ENCODE measurements at regions of chr2 and their contacts with region 1.

Region 1: DNA sequence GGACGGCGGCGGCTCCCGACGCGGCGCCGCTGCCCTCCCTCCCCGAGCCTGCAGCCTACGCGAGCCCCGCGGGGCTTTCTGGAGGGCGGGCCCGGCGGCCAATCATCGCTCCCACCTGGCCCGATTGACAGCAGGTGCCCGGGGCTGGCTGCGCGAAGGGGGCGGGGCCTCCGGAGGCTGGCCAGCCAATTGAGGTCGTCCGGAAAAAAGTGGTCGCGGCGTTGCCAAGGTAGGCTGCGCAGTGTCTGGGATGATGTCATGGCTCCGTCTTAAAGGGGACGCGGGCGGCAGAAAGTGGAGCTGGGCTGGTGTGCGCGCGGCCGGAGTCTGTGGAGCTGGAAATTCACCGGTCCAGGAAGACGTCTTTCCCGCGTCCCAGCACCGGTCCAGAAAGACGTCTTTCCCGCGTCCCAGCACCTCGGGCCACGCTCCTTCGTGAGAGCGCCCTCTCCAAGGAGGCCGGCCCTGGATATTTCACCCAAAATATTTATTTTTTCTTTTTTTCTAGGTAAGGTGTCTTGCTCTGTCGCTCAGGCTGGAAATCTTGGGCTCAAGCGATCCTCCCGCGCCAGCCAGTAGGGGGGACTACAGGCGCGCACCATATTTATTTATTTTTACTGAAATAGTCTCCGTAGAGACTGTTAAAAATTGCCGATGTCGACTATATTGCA is at the start of gene ACTR1B:
- DNase-seq: peak; percentile 93
- ATAC-seq: peak; percentile 89
- H3K4me3 Mint-ChIP-seq: peak within 1 kb of the TSS; percentile 92
- H3K27ac Mint-ChIP-seq: peak within 1 kb of the TSS; percentile 91
- H3K4me1 Mint-ChIP-seq: peaks cover 28% of the 10 kb centered on the region
- H3K27me3 Mint-ChIP-seq: no peaks in the 10 kb centered on the region
- CTCF ChIP-seq: no peak
- total RNA-seq, gene ACTR1B: 55.0 and 55.9 TPM in 2 replicates

Region 2: DNA sequence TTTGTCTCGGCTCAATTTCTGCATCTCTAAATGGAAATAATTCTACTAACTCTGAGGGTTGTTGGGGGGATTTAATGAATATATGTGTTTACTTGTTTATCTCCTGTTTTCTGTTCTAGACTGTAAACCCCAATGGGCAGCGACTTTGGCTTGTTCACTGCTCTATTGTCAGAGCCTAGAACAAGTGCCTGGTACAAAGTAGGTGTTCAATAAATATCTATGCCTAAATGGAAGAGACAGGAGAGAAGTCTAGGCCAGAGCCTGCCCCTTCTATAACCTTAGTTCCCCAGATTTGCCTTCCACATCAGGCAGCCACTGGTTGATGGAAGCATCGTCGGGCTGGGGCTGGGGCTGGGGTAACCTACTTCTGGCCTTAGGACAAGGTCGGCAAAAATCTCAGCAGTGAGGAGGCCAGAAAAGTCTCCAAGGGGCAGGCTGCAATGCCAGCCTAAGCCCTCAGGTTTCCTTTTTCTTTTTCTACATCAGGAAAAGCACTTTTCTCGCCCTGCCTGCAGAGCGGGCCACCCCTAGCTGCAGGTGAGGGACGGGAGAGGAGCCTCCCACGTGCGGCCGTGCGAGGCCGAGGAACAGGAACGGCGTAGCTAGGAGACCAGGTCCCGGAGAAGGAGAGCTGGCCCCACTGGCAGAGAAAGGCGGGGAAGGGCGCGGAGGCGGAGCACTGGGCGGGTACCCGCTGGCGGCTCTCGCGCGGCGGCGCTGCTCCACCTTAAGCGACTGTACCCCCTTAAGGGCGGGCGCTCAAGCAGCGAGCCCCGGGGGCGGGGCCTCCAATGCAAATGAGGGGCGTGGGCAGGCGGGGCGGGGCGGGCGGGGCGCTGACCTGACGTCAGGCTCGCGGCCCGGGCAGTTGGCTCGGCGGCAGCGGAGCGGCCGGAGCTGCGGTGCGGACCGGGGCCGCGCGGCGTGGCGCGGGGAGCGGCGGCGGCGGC is 903.8 kb before region 1 on chr2 and contains the start of gene CNNM4:
- CTCF ChIA-PET with region 1: no interaction called
- POLR2A ChIA-PET with region 1: no interaction called
- intact Hi-C with region 1: loop called (anchors 5 kb)
- DNase-seq: peak; percentile 89
- ATAC-seq: peak; percentile 91
- H3K4me3 Mint-ChIP-seq: peak within 1 kb of the TSS; percentile 90
- H3K27ac Mint-ChIP-seq: peak within 1 kb of the TSS; percentile 89
- H3K4me1 Mint-ChIP-seq: peaks cover 49% of the 10 kb centered on the region
- H3K27me3 Mint-ChIP-seq: no peaks in the 10 kb centered on the region
- CTCF ChIP-seq: no peak
- total RNA-seq, gene CNNM4: 7.4 and 10.0 TPM in 2 replicates

Region 3: DNA sequence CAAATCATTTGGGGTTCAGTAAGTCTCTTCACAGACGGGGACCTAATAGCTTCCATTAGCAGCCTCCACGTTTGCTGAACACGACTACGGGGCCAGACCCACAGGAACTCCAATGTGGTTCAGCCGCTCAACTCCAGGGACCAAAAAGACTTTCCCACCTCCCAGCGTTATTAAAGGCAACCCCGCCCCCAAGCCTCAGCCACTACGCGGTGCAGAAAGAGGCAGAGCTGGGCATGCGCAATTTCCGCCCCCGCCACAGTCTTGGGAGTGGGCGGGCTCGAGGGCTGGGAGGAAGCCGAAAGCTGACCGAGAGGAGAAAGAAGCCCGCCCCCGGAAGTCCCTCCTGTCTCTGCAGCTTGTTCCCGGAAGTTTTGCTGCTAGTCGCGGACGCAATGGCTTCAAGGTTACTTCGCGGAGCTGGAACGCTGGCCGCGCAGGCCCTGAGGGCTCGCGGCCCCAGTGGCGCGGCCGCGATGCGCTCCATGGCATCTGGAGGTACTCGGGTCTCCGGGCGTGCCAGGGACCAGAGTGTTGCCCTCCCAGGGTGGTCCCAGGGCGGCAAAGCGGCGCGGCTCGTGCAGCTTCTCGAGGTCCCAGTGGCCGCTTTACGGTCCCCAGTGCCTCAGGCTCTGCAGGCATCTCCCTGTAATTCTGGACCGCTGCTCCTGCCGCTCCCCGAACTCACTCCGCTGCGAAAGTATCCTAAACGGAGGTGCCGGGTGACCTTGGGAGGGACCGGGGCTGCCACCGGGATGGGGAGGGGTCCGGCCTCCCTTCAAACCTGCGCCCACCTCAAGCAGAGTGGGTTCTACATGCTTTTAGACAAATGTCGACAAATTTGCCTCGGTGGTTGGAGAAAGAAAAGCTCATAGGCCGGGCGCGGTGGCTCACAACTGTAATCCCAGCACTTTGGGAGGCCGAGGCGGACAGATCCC is 18.1 kb before region 1 on chr2 and contains the start of gene COX5B:
- CTCF ChIA-PET with region 1: interaction called, 18 read pairs
- POLR2A ChIA-PET with region 1: interaction called, 207 read pairs
- intact Hi-C with region 1: loop called (anchors 1 kb)
- DNase-seq: peak; percentile 94
- ATAC-seq: peak; percentile 98
- H3K4me3 Mint-ChIP-seq: peak within 1 kb of the TSS; percentile 94
- H3K27ac Mint-ChIP-seq: peak within 1 kb of the TSS; percentile 94
- H3K4me1 Mint-ChIP-seq: peaks cover 19% of the 10 kb centered on the region
- H3K27me3 Mint-ChIP-seq: no peaks in the 10 kb centered on the region
- CTCF ChIP-seq: no peak
- total RNA-seq, gene COX5B: 156 and 183 TPM in 2 replicates

Region 4: GRCh38 chr2:97740590-97741182 is 76.6 kb after region 1 on chr2:
- CTCF ChIA-PET with region 1: no interaction called
- POLR2A ChIA-PET with region 1: no interaction called
- intact Hi-C with region 1: loop called (anchors 5 kb)
- DNase-seq: no peak
- ATAC-seq: peak; percentile 78
- H3K4me3 Mint-ChIP-seq: no peak overlapping the region
- H3K27ac Mint-ChIP-seq: no peak overlapping the region
- H3K4me1 Mint-ChIP-seq: peaks cover 29% of the 10 kb centered on the region
- H3K27me3 Mint-ChIP-seq: no peaks in the 10 kb centered on the region
- CTCF ChIP-seq: peak; percentile 35

Region 5: DNA sequence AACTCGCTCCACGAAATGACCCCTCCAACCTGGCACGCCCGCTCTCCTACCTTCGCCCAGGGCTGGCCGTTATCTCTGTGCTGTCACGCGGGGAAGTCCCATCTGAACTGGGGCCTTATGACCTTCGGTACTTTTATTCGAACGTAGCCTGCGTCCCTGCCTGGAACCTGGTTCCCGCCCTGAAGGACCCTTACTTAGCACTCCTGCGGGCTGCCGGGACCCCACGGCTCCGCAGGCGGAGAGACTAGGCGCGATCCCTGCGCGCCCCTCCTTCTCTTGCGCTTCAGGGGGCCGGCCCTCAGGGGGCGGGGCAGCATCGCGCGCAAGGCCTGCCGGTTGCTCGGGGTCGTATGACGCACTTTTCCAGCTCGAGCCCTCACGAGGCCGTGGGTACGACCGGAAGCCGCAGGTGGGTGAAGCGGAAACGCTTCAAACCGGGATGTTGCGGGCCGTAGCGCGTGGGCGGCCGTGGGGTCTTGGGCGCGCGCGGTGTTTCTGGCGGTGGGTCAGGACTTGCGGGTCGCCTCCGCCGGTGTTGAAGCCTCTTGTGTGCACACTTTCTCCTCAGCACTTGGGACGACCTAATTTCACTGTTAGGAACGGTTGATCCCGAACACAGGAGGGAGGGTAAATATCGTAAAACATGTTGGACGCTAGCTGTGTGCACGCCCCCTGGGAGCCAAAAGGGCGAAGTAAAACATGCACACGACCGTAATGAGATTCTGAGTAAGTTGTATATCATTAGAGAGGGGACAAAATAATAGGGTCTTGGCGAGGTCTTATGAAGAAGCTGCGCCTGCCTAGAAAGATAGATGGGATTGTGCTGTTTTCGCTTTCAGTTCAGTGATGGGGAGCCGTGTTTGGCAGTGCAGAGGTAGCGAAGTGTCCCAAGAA is 1490.8 kb after region 1 on chr2 and contains the starts of genes LIPT1 and TSGA10:
- CTCF ChIA-PET with region 1: no interaction called
- POLR2A ChIA-PET with region 1: no interaction called
- intact Hi-C with region 1: loop called (anchors 5 kb)
- DNase-seq: peak; percentile 92
- ATAC-seq: peak; percentile 91
- H3K4me3 Mint-ChIP-seq: peak within 1 kb of the TSS; percentile 90
- H3K27ac Mint-ChIP-seq: peak within 1 kb of the TSS; percentile 92
- H3K4me1 Mint-ChIP-seq: peaks cover 55% of the 10 kb centered on the region
- H3K27me3 Mint-ChIP-seq: no peaks in the 10 kb centered on the region
- CTCF ChIP-seq: no peak
- total RNA-seq, gene LIPT1: 15.1 and 18.1 TPM in 2 replicates
- total RNA-seq, gene TSGA10: 18.5 and 20.4 TPM in 2 replicates